ENCODE measurements at regions of chr12 and their contacts with region 1.

Region 1: DNA sequence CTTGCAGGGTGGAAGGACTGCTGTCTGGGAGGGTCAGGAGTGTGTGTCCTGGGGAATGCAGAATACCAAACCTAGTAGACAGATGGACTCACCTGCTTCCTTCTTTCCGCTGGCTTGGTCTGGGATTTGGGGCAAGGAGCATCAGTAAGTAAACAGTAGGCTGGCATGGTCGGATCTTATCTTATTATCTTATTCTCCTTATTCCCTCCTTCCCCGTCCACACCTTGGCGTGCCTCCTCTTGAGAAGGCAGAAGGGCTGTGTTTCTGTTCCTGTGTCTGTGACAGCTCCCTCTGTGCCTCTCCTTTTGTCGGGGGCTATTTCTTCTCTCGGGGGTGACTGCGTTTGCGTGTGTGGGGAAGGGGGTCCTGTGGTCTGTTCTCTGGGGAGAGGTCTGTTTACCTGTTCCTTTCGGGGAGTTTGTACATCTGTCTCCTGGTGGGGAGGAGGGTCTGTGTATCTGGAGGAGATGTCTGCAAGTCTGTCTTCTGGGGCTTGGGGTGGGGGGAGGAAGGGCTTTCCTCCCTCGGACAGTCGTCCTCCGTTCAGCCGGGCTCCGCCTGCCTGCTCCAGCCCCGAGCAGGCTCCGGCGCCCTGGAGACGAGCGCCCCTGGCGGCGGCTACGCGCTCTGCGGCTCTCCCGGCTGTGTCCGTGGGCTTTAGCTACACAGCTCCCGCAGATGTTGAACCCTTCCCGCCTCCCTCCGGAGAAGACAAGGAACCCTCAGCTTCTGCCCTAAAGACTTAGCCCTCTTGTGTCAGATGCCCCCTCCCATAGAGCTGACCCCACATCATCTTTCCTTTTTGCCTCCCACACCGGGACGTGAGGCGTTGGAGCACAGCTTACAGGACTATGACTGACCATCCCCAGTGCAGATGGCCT is 4.3 kb downstream of the KRT86 start:
- DNase-seq: peak; percentile 38
- H3K4me3 ChIP-seq: peak overlapping the region; percentile 17
- H3K27ac ChIP-seq: peak overlapping the region; percentile 21
- H3K27me3 ChIP-seq: no peaks in the 10 kb centered on the region
- CTCF ChIP-seq: peak; percentile 97

Region 2: DNA sequence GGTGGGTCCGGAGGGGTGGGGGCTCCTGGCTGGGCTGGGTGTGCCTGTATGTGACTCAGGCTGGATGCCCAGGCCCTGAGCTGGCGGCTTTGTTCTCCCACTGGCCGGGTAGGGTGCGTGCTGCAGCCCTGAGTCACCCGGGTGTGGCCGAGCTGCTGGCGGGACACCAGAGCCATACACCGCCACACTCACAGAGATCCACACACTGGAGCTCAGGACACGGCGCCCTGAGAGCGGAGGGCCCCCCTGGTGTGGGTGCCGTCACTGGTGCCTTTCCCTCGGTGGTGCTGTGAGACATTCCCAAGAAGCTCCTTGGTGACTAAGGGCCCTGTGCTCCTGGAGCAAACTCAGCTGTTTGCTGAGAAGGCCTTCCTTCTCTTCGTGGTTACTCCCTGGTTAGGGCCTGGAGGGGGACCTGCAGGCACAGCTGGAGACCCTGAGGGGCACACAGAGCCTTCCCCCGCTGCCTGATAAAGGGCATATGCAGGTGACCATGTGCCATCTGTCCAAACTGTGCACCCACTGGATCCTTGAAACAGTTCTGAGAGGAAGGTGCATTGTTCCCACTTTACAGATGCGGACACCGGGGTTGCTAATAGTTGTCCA is 131.3 kb before region 1 on chr12:
- CTCF ChIA-PET with region 1: interaction called, 7 read pairs
- POLR2A ChIA-PET with region 1: interaction called, 10 read pairs
- DNase-seq: peak; percentile 96
- H3K4me3 ChIP-seq: no peak overlapping the region
- H3K27ac ChIP-seq: peak overlapping the region; percentile 98
- H3K27me3 ChIP-seq: no peaks in the 10 kb centered on the region
- CTCF ChIP-seq: no peak

Region 3: DNA sequence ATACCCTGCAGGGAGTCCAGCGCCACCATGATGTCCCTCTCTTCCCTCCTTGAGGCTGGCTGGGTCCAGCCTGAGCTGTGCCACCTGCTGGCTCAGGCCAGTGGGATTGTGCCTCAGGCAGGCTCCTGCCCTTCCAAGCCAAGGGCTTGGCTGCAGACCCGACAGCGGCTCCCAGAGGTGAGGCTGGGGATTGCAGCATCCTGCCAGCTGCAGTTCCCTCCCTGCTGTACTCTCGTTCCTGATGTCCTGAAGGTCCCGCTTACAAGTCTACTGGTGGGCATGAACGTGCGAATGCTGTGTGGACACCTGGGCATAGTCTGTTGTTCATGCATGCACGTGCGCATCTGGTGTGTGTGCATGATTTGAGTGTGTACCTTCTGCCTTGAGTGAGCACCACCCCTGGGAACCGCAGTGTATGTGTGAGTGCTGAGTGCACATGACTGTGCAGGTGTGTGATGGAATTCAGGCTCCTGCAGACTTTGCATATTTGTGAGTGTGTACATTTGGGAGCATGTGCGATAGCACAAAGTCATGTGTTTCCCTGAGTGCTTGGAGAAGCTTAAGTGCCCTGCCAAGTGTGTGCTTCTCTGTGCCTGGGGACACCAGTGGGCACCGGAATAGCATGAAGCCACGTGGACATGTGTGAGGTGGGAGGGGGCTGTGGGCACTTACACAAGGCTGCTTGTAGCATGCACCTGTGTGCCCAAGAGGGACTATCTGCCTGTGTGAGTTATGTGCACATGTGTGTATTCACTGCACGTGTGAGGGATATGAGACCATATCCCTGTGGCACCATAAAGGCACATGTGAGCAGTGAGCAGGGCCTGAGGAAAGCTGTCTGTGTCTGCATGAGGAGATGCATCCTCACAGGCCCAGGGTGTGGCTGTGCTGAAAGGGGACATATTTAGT is 65.0 kb before region 1 on chr12:
- CTCF ChIA-PET with region 1: interaction called, 23 read pairs
- POLR2A ChIA-PET with region 1: no interaction called
- DNase-seq: peak; percentile 61
- H3K4me3 ChIP-seq: no peak overlapping the region
- H3K27ac ChIP-seq: no peak overlapping the region
- H3K27me3 ChIP-seq: no peaks in the 10 kb centered on the region
- CTCF ChIP-seq: peak; percentile 99

Region 4: GRCh38 chr12:52243856-52244614 is 34.7 kb before region 1 on chr12:
- CTCF ChIA-PET with region 1: interaction called, 42 read pairs
- POLR2A ChIA-PET with region 1: no interaction called
- DNase-seq: peak; percentile 65
- H3K4me3 ChIP-seq: no peak overlapping the region
- H3K27ac ChIP-seq: peak overlapping the region; percentile 77
- H3K27me3 ChIP-seq: no peaks in the 10 kb centered on the region
- CTCF ChIP-seq: no peak

Region 5: GRCh38 chr12:52268212-52268611 is 10.6 kb before region 1 on chr12:
- CTCF ChIA-PET with region 1: interaction called, 121 read pairs
- POLR2A ChIA-PET with region 1: no interaction called
- DNase-seq: no peak
- H3K4me3 ChIP-seq: no peak overlapping the region
- H3K27ac ChIP-seq: no peak overlapping the region
- H3K27me3 ChIP-seq: peaks cover 28% of the 10 kb centered on the region
- CTCF ChIP-seq: no peak

Region 6: GRCh38 chr12:52327052-52327829 is 48.5 kb after region 1 on chr12:
- CTCF ChIA-PET with region 1: interaction called, 25 read pairs
- POLR2A ChIA-PET with region 1: no interaction called
- DNase-seq: peak; percentile 72
- H3K4me3 ChIP-seq: no peak overlapping the region
- H3K27ac ChIP-seq: no peak overlapping the region
- H3K27me3 ChIP-seq: peaks cover 38% of the 10 kb centered on the region
- CTCF ChIP-seq: peak; percentile 94